ENCODE measurements at regions of chr4 and their contacts with region 1.

Region 1: DNA sequence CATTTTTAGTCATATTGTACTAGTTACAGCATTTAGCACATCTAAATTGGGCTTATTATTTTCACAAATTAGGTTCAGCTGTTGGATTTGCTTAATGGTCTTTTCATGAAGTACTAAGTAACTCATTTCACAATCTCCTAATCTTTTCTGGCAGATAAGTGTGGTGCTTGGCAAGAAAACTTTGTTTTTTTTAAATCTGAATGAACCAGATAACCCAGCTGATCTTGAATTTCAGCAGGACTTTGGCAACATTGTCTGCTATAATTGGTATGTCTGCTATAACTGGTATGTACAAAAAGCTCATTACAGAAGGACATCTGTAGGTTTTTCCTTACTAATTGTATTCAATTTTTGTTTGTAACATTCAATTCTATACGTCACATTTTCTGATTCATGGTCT is 22.7 kb downstream of the WDR19 start:
- DNase-seq: no peak
- H3K4me3 ChIP-seq: no peak overlapping the region
- H3K27me3 ChIP-seq: no peaks in the 10 kb centered on the region
- CTCF ChIP-seq: no peak

Region 2: DNA sequence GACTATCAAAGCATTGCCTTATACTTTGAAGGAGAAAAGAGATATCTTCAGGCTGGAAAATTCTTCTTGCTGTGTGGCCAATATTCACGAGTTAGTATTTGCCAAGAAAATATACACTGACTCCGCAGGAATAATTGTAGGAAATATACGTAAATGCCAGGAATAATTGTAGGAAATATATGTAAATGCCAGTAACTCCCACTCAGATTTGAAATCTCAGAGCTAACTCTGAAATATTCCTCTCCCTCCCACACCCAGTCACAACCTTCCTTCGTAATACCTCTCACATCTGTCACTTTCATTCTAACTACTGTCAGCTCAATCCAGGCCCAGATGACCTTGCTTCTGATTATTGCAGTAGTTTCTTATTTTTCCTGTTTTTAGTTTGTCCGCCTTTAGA is 50.9 kb after region 1 on chr4:
- CTCF ChIA-PET with region 1: no interaction called
- POLR2A ChIA-PET with region 1: interaction called, 10 read pairs
- DNase-seq: no peak
- H3K4me3 ChIP-seq: no peak overlapping the region
- H3K27me3 ChIP-seq: no peaks in the 10 kb centered on the region
- CTCF ChIP-seq: no peak

Region 3: GRCh38 chr4:39308611-39309010 is 103.6 kb after region 1 on chr4:
- CTCF ChIA-PET with region 1: no interaction called
- POLR2A ChIA-PET with region 1: no interaction called
- DNase-seq: no peak
- H3K4me3 ChIP-seq: no peak overlapping the region
- H3K27me3 ChIP-seq: no peaks in the 10 kb centered on the region
- CTCF ChIP-seq: no peak

Measured in BJ (cell line).